KBM-7 (cell line): ENCODE measurements at regions of chr11 and their contacts with region 1.

Region 1: DNA sequence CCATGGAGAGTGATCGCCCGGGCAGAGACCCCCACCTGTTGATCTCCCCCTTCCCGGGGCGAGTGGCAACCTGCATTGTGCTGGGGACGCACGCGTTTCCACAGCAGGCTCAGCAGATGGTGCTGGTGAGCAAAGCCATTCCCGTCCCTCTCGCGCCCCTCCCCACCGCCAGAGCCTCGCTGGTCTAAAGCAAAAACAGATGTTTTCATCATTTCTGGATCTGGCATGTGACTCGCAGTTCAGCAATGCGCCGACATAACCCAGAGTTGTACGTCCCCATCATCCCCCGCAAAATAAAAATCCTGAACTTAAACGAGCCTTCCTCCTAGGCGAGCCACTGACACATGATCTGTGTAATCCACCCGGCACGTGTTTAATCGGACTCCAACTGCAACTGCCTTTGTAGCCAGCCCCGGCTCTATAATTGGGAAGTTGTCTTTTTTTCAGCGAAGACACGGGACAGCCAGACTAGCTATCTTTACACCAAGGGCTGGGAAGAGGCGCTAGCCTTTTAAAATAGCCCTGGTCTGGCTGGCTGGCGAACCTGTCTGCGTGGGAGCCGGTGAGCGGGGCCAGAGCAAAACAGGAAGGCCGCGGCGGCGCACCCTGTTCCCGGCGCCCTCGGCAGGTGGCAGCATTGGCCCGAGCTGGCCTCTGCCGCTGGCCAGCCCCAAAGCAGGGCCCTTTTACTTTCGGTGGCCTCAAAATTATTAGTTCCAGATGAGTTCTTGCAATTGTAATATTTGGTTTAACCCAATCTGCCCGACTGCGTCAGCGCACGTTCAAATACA is 203.0 kb upstream of the SORL1-AS1 start:
- DNase-seq: peak; percentile 89

Region 2: GRCh38 chr11:121389651-121390050 is 266.1 kb before region 1 on chr11:
- in situ Hi-C with region 1: no loop called
- DNase-seq: no peak

Region 3: DNA sequence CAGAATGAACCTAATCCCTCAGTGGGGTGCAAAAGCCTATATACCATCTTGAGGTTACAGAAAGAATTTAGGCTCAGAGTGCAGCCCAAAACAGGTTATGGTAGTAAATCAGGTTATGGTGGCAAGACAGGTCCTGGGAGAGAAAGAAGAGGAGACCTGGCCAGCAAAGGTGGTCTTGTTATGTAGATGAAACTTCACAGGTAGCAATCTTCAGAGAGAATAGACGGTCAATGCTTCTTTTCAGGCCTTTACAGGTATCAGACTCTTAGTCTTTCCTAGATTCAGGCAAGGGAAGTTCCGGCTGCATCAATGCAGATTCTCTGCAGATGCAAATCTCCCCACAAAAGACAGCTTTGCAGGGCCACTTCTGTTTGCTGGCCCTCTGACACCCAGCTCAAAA is 249.4 kb before region 1 on chr11:
- in situ Hi-C with region 1: no loop called
- DNase-seq: no peak

Region 4: DNA sequence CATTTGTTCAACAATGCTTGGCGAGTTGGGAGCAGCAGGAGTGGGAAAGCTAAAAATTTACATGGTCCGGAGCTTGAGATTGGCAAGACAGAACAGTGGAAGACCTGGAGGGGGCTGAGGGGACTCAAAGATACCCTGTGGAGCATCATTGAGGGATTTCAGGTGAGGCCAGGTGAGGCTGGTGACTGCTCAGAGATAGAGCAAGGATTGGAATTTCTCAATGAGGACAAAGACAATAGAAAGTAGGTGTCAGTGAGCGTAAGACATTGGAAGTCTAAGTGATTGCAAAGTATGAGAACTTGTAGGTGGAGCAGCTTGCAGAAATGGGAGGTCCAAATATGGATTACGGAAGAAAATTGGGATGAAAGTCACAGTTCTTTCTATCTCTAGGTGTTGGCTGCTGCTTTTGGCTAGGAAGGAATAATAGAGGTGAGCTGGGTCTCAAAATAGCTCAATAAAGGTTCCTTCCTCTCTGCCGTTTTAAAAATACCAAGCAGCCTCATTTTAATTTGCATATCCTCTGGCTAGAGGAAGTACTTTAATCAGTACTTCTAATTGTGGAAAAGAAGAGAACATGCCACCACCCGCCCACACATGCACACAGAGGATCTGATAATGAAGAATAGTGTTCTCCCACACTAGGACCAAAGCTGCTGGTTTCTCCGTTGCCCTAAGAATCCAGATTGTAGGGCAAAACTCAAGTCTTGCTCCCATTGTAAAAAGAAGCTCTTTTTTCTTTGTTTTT is 161.2 kb before region 1 on chr11:
- in situ Hi-C with region 1: no loop called
- DNase-seq: peak; percentile 70

Region 5: GRCh38 chr11:122215244-122215992 is 559.7 kb after region 1 on chr11:
- in situ Hi-C with region 1: loop called (anchors 25 kb)
- DNase-seq: peak; percentile 55

Region 6: GRCh38 chr11:122505304-122506006 is 849.7 kb after region 1 on chr11:
- in situ Hi-C with region 1: loop called (anchors 25 kb)
- DNase-seq: peak; percentile 69